Heart right ventricle (tissue), 16 donors: ENCODE measurements at regions of chr5 and their contacts with region 1.

Region 1: DNA sequence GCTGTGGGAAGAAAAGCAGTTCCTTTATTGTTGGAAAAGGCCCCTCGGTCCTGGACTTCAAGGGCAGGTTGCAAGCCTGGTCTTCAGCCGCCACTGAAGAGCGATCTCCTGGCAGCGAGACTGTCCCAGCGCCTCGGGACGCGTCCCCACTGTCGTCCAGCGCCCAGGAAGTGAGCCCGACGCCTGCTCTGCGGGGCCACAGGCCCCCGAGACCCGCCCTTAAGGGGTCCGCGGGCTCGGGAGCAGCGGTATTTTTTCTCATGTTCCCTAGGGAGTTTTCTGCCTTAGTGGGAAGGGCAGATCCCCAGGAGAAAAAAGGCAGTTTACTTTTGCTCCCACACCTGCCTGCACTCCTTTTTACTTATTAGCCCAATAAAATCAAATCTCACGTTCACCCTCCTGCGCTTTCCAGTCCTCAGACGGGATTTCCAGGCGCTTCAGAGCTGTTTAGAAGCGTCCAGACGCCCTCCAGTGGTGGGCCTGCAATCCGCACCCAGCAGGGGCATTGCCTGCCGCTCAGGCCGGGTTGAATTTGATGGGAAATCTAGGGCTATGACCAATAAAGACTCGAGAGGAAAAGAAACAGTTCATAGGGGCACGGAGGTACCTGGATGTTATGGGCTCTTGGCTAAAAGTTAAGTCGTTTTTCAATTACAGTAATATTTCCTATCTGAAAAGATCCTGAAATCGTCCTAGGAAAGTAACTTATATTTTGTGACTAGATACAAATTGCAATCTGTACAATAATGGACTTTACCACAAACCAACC is 2.8 kb upstream of the EFNA5 start:
- DNase-seq: peak; percentile 81 to 84
- ATAC-seq: peak; percentile 46 to 75 (median 63)
- H3K4me3 ChIP-seq: peak overlapping the region; percentile 22 to 73 (median 62)
- H3K27ac ChIP-seq: peak overlapping the region; percentile 64 to 93 (median 85)
- H3K4me1 ChIP-seq: peaks cover 0 to 40% (median 33%) of the 10 kb centered on the region in 9 donors
- H3K27me3 ChIP-seq: peaks cover 0 to 93% (median 31%) of the 10 kb centered on the region in 7 donors
- CTCF ChIP-seq: peak; percentile 74 to 96 (median 93)

Region 2: GRCh38 chr5:107104040-107104995 is 569.2 kb before region 1 on chr5:
- intact Hi-C with region 1: loop called in 5 of 10 experiments (anchors 5 to 10 kb)
- DNase-seq: peak in 1 of 2 donors; percentile 16
- ATAC-seq: peak; percentile 69 to 96 (median 83)
- H3K4me3 ChIP-seq: no peak overlapping the region
- H3K27ac ChIP-seq: peak overlapping the region in 6 of 10 donors; percentile 24 to 55 (median 44)
- H3K4me1 ChIP-seq: no peaks in the 10 kb centered on the region
- H3K27me3 ChIP-seq: no peaks in the 10 kb centered on the region
- CTCF ChIP-seq: peak in 7 of 9 donors; percentile 19 to 57 (median 44)

Region 3: GRCh38 chr5:107149243-107150005 is 524.1 kb before region 1 on chr5:
- intact Hi-C with region 1: no loop called
- DNase-seq: no peak
- ATAC-seq: no peak
- H3K4me3 ChIP-seq: no peak overlapping the region
- H3K27ac ChIP-seq: no peak overlapping the region
- H3K4me1 ChIP-seq: no peaks in the 10 kb centered on the region
- H3K27me3 ChIP-seq: no peaks in the 10 kb centered on the region
- CTCF ChIP-seq: no peak

Region 4: DNA sequence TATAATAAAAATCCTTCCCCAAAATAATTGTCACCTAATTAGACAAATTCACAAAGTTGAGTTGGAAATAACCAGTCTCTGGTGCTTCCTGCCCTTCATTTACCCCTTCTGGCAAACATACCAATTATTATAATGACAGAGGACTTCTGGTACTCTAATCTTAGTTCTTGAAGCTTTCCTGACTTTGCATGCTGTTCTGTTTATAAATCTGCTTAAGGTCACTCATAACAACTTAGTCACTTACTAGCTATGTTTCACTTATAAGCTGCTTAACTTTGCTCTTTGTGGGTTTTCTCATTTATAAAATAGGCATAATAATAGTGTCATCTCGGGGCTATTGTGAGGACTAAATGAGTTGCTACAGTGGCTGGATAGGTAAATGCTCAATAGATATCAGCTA is 449.3 kb before region 1 on chr5:
- intact Hi-C with region 1: loop called in 6 of 10 experiments (anchors 5 to 10 kb)
- DNase-seq: no peak
- ATAC-seq: peak in 4 of 8 donors; percentile 58 to 77 (median 70)
- H3K4me3 ChIP-seq: no peak overlapping the region
- H3K27ac ChIP-seq: peak overlapping the region in 7 of 10 donors; percentile 4 to 38 (median 12)
- H3K4me1 ChIP-seq: peaks cover 0 to 7% (median 3%) of the 10 kb centered on the region in 9 donors
- H3K27me3 ChIP-seq: no peaks in the 10 kb centered on the region
- CTCF ChIP-seq: no peak

Region 5: DNA sequence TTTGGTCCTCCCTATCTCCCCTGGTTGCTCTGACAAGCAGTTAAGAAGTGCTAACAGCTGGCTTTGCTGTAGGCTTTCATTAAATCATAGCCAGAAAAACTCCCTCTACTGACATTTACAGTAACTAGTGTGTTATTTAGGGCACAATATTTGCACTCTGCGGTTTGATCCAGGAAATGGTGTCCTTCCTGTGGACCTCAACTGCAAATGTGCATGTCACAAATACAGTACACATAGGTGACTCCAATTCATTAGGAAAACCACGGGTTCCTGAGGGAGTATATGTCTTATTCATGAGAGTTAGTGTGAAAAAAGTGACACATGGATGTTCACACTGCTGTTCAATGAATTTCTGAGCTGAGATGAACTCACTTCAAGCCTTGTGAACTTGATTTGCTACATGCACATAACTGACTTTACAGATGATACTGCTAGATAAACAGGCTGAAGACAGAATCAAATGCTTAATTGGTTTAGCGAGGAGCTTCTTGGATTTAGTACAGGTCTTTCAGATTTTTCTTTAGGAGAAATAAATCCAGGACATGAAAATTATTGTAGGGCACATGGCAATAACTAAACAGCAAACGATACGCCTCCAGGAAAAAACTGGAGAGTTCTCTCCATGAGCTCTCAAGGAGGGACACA is 284.3 kb before region 1 on chr5:
- intact Hi-C with region 1: loop called in 3 of 10 experiments (anchors 10 kb)
- DNase-seq: no peak
- ATAC-seq: peak; percentile 46 to 90 (median 79)
- H3K4me3 ChIP-seq: no peak overlapping the region
- H3K27ac ChIP-seq: peak overlapping the region in 8 of 10 donors; percentile 22 to 74 (median 64)
- H3K4me1 ChIP-seq: peaks cover 0 to 35% (median 25%) of the 10 kb centered on the region in 9 donors
- H3K27me3 ChIP-seq: no peaks in the 10 kb centered on the region
- CTCF ChIP-seq: peak in 5 of 9 donors; percentile 17 to 41 (median 36)

Region 6: DNA sequence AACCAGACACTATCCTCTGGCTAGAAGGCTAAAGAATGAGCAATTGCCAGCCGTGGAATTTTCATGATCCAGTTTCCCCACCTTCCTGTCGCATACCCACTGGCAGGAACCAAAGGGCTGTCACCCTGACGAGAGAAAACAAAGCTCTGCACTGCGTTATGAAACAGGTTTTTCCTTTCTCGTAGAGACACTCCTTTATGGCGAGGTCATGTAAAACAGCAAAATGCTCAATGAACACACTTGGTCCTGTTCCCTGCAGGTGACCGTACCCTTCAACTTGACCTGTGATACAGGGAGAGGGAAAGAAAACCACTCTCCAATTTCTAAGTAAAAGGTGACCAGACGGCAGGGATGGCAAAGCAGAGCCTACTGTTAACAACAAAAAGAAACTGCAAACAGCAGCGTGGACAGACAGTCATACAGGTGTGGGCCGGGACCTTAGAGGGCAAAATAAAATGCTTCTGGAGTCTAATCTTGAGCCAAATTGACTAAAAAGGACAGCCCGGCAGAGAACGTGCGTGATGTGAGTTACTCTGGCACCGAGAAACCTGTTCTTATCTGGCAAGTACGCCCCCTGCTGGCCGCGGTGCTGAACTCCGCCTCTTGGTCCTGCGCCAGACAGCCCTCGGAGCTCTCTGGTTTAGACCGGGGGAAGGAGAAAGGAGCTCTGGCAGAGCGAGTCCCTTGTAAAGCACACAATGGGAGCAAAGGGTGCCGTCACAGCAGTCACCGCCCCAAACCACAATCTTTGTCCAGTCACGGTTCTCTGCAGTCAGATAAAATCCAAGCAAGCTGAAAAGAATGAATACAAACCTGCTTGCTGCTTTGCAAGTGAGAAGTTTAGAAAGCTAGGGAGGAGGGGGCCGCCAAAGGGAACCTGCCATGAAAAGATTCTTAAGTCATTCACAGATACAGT is 101.7 kb before region 1 on chr5:
- intact Hi-C with region 1: loop called in 4 of 10 experiments (anchors 5 kb)
- DNase-seq: peak; percentile 89 to 91
- ATAC-seq: peak; percentile 86 to 95 (median 92)
- H3K4me3 ChIP-seq: peak overlapping the region in 9 of 10 donors; percentile 22 to 57 (median 47)
- H3K27ac ChIP-seq: peak overlapping the region; percentile 58 to 92 (median 82)
- H3K4me1 ChIP-seq: peaks cover 0 to 49% (median 26%) of the 10 kb centered on the region in 9 donors
- H3K27me3 ChIP-seq: peaks cover 0 to 4% (median 0%) of the 10 kb centered on the region in 7 donors
- CTCF ChIP-seq: peak; percentile 82 to 95 (median 94)

Region 7: DNA sequence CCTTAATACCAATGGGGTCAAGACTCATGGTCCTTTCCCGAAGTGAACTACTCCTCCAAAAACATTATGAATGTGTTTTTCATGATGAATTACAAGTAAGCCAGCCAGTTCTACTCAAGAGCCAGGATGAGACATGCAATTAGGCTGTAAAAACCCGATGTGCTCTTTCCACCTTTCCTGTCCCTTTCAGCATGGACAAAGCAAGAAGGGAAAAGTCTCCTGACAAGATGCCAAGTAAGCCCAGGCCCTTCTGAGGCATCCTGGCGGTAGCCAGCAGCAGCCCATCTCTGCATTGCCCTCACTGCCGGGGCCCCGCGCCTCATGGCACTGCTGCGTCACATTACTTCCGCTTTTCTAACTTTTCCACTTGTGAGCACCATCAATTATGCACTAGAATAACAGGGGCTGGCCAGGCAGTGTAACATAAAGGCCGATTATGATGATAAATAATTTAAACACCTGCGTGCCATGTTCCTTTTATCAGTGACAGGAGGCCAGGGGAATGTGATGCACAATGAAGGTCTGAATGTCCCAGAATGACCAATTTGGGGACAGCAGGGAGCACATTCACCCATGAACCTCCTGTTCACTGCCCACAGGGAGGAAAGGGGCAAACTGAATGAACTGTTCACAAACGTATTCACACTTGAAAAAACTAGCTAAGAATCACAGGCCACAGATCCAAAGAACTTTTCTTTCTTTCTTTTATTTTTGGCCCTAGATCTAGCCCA is 40.2 kb before region 1 on chr5:
- intact Hi-C with region 1: no loop called
- DNase-seq: no peak
- ATAC-seq: peak in 2 of 8 donors; percentile 29 to 38
- H3K4me3 ChIP-seq: no peak overlapping the region
- H3K27ac ChIP-seq: no peak overlapping the region
- H3K4me1 ChIP-seq: peaks cover 0 to 17% (median 0%) of the 10 kb centered on the region in 9 donors
- H3K27me3 ChIP-seq: no peaks in the 10 kb centered on the region
- CTCF ChIP-seq: no peak